OCI-LY7 (cell line): ENCODE measurements at regions of chr9 and their contacts with region 1.

Region 1: GRCh38 chr9:19969721-19970120 is 180.9 kb upstream of the SLC24A2 start:
- DNase-seq: no peak
- H3K4me3 ChIP-seq: no peak overlapping the region
- H3K27ac ChIP-seq: no peak overlapping the region
- H3K4me1 ChIP-seq: no peaks in the 10 kb centered on the region
- CTCF ChIP-seq: no peak

Region 2: GRCh38 chr9:19598722-19599121 is 371.0 kb before region 1 on chr9:
- CTCF ChIA-PET with region 1: no interaction called
- POLR2A ChIA-PET with region 1: no interaction called
- intact Hi-C with region 1: no loop called
- DNase-seq: no peak
- H3K4me3 ChIP-seq: no peak overlapping the region
- H3K27ac ChIP-seq: no peak overlapping the region
- H3K4me1 ChIP-seq: no peaks in the 10 kb centered on the region
- CTCF ChIP-seq: no peak

Region 3: DNA sequence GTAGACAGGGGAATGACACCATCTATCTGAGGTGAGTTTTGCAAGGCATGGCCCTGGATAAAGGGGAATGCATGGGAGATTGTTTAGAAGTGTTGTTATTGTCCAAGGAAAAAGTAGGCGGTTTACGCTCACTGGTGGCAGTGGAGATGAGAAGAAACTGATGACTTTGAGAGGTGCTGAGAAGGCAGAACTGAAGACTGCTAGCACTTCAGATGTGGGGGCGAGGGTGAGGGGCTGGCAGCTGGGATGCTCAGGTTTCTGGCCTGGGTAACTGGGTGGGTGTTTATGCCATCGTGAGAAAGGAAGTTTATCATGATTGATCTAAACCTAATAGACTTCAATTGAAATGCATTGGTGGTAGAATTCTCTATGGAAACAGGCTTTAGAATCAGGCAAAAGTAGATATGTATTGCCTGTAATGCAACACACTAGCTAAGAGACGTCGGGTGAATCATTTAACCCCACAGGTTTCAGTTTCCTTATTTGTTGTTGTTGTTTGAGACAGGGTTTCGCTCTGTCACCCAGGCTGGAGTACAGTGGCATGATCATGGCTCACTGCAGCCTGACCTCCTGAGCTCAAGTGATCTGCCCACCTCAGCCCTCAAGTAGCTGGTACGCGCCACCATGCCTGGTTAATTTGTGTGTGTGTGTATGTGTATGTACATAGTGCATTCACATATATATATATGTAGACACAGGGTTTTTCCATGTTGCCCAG is 304.4 kb before region 1 on chr9:
- CTCF ChIA-PET with region 1: no interaction called
- POLR2A ChIA-PET with region 1: no interaction called
- intact Hi-C with region 1: no loop called
- DNase-seq: no peak
- H3K4me3 ChIP-seq: no peak overlapping the region
- H3K27ac ChIP-seq: no peak overlapping the region
- H3K4me1 ChIP-seq: no peaks in the 10 kb centered on the region
- CTCF ChIP-seq: no peak

Region 4: GRCh38 chr9:20015427-20015931 is 45.8 kb after region 1 on chr9:
- CTCF ChIA-PET with region 1: no interaction called
- POLR2A ChIA-PET with region 1: interaction called, 10 read pairs
- intact Hi-C with region 1: no loop called
- DNase-seq: peak; percentile 59
- H3K4me3 ChIP-seq: no peak overlapping the region
- H3K27ac ChIP-seq: peak overlapping the region; percentile 32
- H3K4me1 ChIP-seq: peaks cover 11% of the 10 kb centered on the region
- CTCF ChIP-seq: no peak

Region 5: DNA sequence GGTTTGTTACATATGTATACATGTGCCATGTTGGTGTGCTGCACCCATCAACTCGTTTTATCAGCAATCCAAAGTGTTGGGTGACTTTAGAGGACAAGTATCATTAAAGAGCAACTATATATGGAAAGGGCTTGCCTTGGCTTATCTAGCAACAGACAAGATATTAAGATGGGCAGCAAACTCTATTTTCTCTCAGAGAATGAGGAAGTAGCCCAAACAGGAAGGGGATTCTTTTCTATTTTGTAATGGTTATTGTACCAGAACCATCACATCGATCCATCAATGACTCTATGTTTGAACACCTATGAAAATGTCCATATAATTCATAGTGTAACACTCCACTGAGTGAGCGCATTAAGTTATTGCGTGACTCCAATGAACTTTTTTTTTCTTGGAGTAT is 79.3 kb after region 1 on chr9:
- CTCF ChIA-PET with region 1: no interaction called
- POLR2A ChIA-PET with region 1: no interaction called
- intact Hi-C with region 1: no loop called
- DNase-seq: peak; percentile 45
- H3K4me3 ChIP-seq: peak overlapping the region; percentile 9
- H3K27ac ChIP-seq: no peak overlapping the region
- H3K4me1 ChIP-seq: peaks cover 18% of the 10 kb centered on the region
- CTCF ChIP-seq: no peak